Ovary (tissue), 10 donors: ENCODE measurements at regions of chr1 and their contacts with region 1.

Region 1: GRCh38 chr1:160726498-160727315 is 12.3 kb upstream of the SLAMF7 start:
- DNase-seq: peak; percentile 44 to 60 (median 58)
- H3K4me3 ChIP-seq: no peak overlapping the region
- H3K27ac ChIP-seq: no peak overlapping the region
- H3K4me1 ChIP-seq: peaks cover 4% of the 10 kb centered on the region
- H3K27me3 ChIP-seq: no peaks in the 10 kb centered on the region
- CTCF ChIP-seq: peak; percentile 48 to 69 (median 64)
- EP300 ChIP-seq: no peak
- POLR2A ChIP-seq: no peak

Region 2: DNA sequence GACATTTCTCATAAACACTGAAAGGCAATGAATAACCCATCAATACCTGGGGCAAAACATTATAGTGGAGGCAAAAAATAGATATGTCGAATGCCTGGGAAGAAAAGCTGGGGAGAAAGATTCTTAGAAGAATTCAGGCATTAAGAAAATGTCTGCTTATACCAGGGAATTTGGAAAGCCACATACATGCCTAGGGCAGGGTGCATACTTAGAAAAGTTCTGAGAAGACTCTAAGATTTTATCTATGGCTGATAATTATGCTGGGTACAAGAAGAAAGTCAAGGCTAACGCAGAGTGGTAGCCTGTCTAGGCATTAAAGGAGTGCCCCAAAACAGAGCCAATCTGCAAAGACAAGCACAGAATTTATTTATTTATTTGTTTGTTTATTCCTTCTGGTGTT is 222.0 kb before region 1 on chr1:
- intact Hi-C with region 1: no loop called
- DNase-seq: no peak
- H3K4me3 ChIP-seq: no peak overlapping the region
- H3K27ac ChIP-seq: no peak overlapping the region
- H3K4me1 ChIP-seq: no peaks in the 10 kb centered on the region
- H3K27me3 ChIP-seq: no peaks in the 10 kb centered on the region
- CTCF ChIP-seq: no peak
- EP300 ChIP-seq: no peak
- POLR2A ChIP-seq: no peak

Region 3: GRCh38 chr1:160830321-160831153 is 103.8 kb after region 1 on chr1:
- intact Hi-C with region 1: loop called in 1 of 4 experiments (anchors 5 kb)
- DNase-seq: peak; percentile 36 to 73 (median 45)
- H3K4me3 ChIP-seq: no peak overlapping the region
- H3K27ac ChIP-seq: no peak overlapping the region
- H3K4me1 ChIP-seq: no peaks in the 10 kb centered on the region
- H3K27me3 ChIP-seq: no peaks in the 10 kb centered on the region
- CTCF ChIP-seq: no peak
- EP300 ChIP-seq: no peak
- POLR2A ChIP-seq: no peak

Region 4: GRCh38 chr1:160951443-160952128 is 224.9 kb after region 1 on chr1:
- intact Hi-C with region 1: loop called in 2 of 4 experiments (anchors 2 to 10 kb)
- DNase-seq: peak; percentile 43 to 86 (median 70)
- H3K4me3 ChIP-seq: no peak overlapping the region
- H3K27ac ChIP-seq: no peak overlapping the region
- H3K4me1 ChIP-seq: peaks cover 13% of the 10 kb centered on the region
- H3K27me3 ChIP-seq: no peaks in the 10 kb centered on the region
- CTCF ChIP-seq: peak in 1 of 3 donors; percentile 25
- EP300 ChIP-seq: no peak
- POLR2A ChIP-seq: no peak

Region 5: GRCh38 chr1:160997323-160998038 is 270.8 kb after region 1 on chr1:
- intact Hi-C with region 1: loop called in 2 of 4 experiments (anchors 5 to 10 kb)
- DNase-seq: peak; percentile 43 to 67 (median 63)
- H3K4me3 ChIP-seq: no peak overlapping the region
- H3K27ac ChIP-seq: peak overlapping the region in 1 of 2 donors; percentile 29
- H3K4me1 ChIP-seq: no peaks in the 10 kb centered on the region
- H3K27me3 ChIP-seq: no peaks in the 10 kb centered on the region
- CTCF ChIP-seq: peak in 2 of 3 donors; percentile 9 to 15
- EP300 ChIP-seq: no peak
- POLR2A ChIP-seq: no peak